Activated naive CD4-positive, alpha-beta T cell treated with anti-CD3 and anti-CD28 coated beads, Interleukin-2, amount 10 ng/mL, durations not matched to agents 7 days and 5 days (primary cell): ENCODE measurements at regions of chr1 and their contacts with region 1.

Region 1: GRCh38 chr1:27719286-27720251 is 6.2 kb upstream of the FAM76A start:
- DNase-seq: no peak
- H3K4me3 Mint-ChIP-seq: no peak overlapping the region
- H3K27ac Mint-ChIP-seq: no peak overlapping the region
- H3K4me1 Mint-ChIP-seq: peaks cover 2% of the 10 kb centered on the region
- H3K27me3 Mint-ChIP-seq: peaks cover 47% of the 10 kb centered on the region

Region 2: GRCh38 chr1:27624467-27625178 is 94.9 kb before region 1 on chr1:
- CTCF ChIA-PET with region 1: no interaction called
- DNase-seq: no peak
- H3K4me3 Mint-ChIP-seq: no peak overlapping the region
- H3K27ac Mint-ChIP-seq: no peak overlapping the region
- H3K4me1 Mint-ChIP-seq: peaks cover 22% of the 10 kb centered on the region
- H3K27me3 Mint-ChIP-seq: peaks cover 22% of the 10 kb centered on the region

Region 3: GRCh38 chr1:27671964-27672749 is 47.4 kb before region 1 on chr1 and contains the start of gene IFI6:
- CTCF ChIA-PET with region 1: interaction called, 11 read pairs
- DNase-seq: peak; percentile 91
- H3K4me3 Mint-ChIP-seq: peak within 1 kb of the TSS; percentile 88
- H3K27ac Mint-ChIP-seq: peak within 1 kb of the TSS; percentile 95
- H3K4me1 Mint-ChIP-seq: peaks cover 43% of the 10 kb centered on the region
- H3K27me3 Mint-ChIP-seq: no peaks in the 10 kb centered on the region